CD8-positive, alpha-beta memory T cell (primary cell): ENCODE measurements at regions of chr1 and their contacts with region 1.

Region 1: DNA sequence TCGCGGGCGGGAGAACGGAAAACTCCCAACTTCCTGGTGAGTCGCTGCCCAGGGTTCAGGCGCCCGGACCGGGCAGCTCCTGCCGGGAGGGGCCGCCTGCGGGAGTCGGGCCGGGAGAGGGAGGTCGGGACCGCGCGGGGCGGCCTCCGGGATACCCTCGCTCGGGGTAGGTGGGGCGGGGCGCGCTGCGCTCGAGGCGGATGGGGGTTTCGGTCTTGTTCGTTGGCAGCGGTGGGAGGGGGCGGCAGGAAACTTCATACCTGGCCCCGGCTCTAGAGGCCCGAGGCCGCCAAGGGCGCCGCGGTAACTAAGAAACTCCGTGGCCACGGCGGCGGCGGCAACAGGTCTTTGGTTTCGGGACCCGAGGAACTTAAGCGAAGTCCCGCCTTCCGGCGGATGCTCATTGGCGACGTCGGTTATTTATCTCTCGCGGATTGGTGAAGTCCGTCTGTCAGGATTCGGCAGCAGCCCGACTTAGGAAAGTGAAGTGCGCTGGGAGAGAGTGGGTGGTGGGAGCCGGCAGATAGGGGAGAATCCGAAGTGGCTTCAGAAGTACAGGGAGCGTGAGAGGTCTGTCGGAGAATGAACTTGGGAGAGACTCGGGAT is 546 bp downstream of the NEK7 start:
- DNase-seq: peak; percentile 70 to 87 (median 77)
- H3K4me3 ChIP-seq: peak overlapping the region; percentile 84
- H3K4me3 Mint-ChIP-seq: peak overlapping the region; percentile 95 to 100 (median 99)
- H3K27ac ChIP-seq: peak overlapping the region; percentile 86
- H3K27ac Mint-ChIP-seq: peak overlapping the region; percentile 95 to 100 (median 100)
- H3K4me1 ChIP-seq: peaks cover 35% of the 10 kb centered on the region
- H3K4me1 Mint-ChIP-seq: peaks cover 36 to 56% (median 41%) of the 10 kb centered on the region in 3 donors
- H3K27me3 ChIP-seq: no peaks in the 10 kb centered on the region
- H3K27me3 Mint-ChIP-seq: peaks cover 0 to 3% of the 10 kb centered on the region in 2 donors

Region 2: DNA sequence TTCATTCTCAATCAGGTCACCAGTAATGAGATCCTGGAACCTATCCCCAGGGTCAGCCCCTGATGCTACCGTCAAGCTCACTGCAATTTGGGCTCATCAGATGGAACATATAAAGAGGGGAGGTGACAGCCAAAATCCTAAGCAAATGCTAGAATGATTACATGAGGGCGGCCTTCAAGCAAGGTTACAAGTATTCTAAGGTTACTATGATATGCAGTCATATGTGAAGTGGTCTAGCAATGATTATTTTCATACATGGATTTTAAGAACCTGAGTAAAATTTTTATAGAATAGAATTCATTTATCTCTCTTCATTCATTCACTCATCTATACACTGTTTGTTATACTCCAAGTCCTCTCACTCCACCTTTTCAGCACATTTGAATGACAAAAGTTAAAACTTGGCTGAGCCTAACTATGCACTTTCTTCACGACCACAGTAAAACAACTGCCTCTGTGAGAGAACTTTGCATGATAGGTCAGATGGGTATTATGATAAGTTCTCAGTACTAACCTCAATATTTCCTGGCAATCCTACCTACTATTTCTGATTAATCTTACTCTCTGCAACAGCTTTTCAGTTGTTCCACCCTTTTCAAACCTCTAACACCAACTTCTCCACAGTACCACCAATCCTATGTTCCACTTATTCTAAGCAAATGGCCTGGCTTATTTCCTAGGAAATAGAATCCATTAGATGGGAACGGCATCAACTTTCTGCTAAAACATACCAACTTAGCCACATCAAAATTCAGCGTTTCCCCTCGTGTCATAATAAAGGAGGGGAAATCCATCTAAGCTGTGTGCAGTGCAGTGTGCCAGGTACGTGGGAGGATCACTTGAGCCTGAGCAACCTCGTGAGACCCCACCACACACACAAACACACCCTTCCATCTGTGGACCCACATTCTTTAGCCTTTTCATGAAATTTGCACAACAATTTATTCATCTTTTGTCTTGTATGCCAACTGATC is 208.1 kb before region 1 on chr1:
- CTCF ChIA-PET with region 1: no interaction called
- POLR2A ChIA-PET with region 1: no interaction called
- DNase-seq: peak in 2 of 5 donors; percentile 34 to 48
- H3K4me3 ChIP-seq: peak overlapping the region; percentile 19
- H3K4me3 Mint-ChIP-seq: peak overlapping the region in 6 of 7 donors; percentile 1 to 76 (median 64)
- H3K27ac ChIP-seq: no peak overlapping the region
- H3K27ac Mint-ChIP-seq: peak overlapping the region in 7 of 8 donors; percentile 33 to 84 (median 39)
- H3K4me1 ChIP-seq: peaks cover 22% of the 10 kb centered on the region
- H3K4me1 Mint-ChIP-seq: peaks cover 25 to 33% (median 29%) of the 10 kb centered on the region in 3 donors
- H3K27me3 ChIP-seq: no peaks in the 10 kb centered on the region
- H3K27me3 Mint-ChIP-seq: peaks cover 0 to 18% of the 10 kb centered on the region in 2 donors

Region 3: GRCh38 chr1:198167436-198167934 is 10.1 kb after region 1 on chr1:
- CTCF ChIA-PET with region 1: interaction called, 40 read pairs
- POLR2A ChIA-PET with region 1: interaction called, 10 read pairs
- DNase-seq: peak in 4 of 5 donors; percentile 30 to 81 (median 69)
- H3K4me3 ChIP-seq: peak overlapping the region; percentile 18
- H3K4me3 Mint-ChIP-seq: peak overlapping the region; percentile 58 to 90 (median 75)
- H3K27ac ChIP-seq: peak overlapping the region; percentile 8
- H3K27ac Mint-ChIP-seq: peak overlapping the region; percentile 75 to 99 (median 93)
- H3K4me1 ChIP-seq: peaks cover 96% of the 10 kb centered on the region
- H3K4me1 Mint-ChIP-seq: peaks cover 87 to 96% (median 95%) of the 10 kb centered on the region in 3 donors
- H3K27me3 ChIP-seq: no peaks in the 10 kb centered on the region
- H3K27me3 Mint-ChIP-seq: no peaks in the 10 kb centered on the region

Region 4: GRCh38 chr1:198178615-198179014 is 21.3 kb after region 1 on chr1:
- CTCF ChIA-PET with region 1: interaction called, 3 read pairs
- POLR2A ChIA-PET with region 1: interaction called, 11 read pairs
- DNase-seq: no peak
- H3K4me3 ChIP-seq: no peak overlapping the region
- H3K4me3 Mint-ChIP-seq: peak overlapping the region in 6 of 7 donors; percentile 3 to 69 (median 45)
- H3K27ac ChIP-seq: peak overlapping the region; percentile 4
- H3K27ac Mint-ChIP-seq: peak overlapping the region; percentile 63 to 99 (median 88)
- H3K4me1 ChIP-seq: peaks cover 91% of the 10 kb centered on the region
- H3K4me1 Mint-ChIP-seq: peaks cover 85 to 98% (median 98%) of the 10 kb centered on the region in 3 donors
- H3K27me3 ChIP-seq: no peaks in the 10 kb centered on the region
- H3K27me3 Mint-ChIP-seq: no peaks in the 10 kb centered on the region

Region 5: DNA sequence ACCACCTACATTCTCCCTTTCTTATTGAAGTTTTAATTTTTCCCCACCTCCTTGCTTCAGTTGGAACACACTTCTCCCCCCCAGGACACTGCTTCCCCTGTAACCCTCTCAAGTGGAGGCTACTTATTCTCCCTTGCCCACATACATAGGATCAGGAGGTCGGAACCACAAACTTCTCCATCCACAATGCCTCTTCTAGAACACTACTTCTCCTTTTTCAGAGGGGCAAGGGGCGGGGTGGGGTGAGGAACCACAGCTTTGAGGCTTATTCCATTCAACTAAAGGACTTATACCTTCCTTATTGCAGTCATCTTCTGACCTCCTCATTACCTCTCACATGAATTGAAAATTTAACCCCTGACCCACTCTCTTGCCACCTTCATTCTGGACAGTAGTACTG is 80.8 kb after region 1 on chr1:
- CTCF ChIA-PET with region 1: no interaction called
- POLR2A ChIA-PET with region 1: no interaction called
- DNase-seq: no peak
- H3K4me3 ChIP-seq: no peak overlapping the region
- H3K4me3 Mint-ChIP-seq: no peak overlapping the region
- H3K27ac ChIP-seq: no peak overlapping the region
- H3K27ac Mint-ChIP-seq: no peak overlapping the region
- H3K4me1 ChIP-seq: peaks cover 9% of the 10 kb centered on the region
- H3K4me1 Mint-ChIP-seq: peaks cover 27 to 50% (median 48%) of the 10 kb centered on the region in 3 donors
- H3K27me3 ChIP-seq: no peaks in the 10 kb centered on the region
- H3K27me3 Mint-ChIP-seq: no peaks in the 10 kb centered on the region

Region 6: GRCh38 chr1:198669023-198669698 is 511.8 kb after region 1 on chr1:
- CTCF ChIA-PET with region 1: no interaction called
- POLR2A ChIA-PET with region 1: no interaction called
- DNase-seq: peak; percentile 20 to 76 (median 48)
- H3K4me3 ChIP-seq: no peak overlapping the region
- H3K4me3 Mint-ChIP-seq: peak overlapping the region; percentile 49 to 84 (median 79)
- H3K27ac ChIP-seq: peak overlapping the region; percentile 22
- H3K27ac Mint-ChIP-seq: peak overlapping the region; percentile 94 to 98 (median 98)
- H3K4me1 ChIP-seq: peaks cover 96% of the 10 kb centered on the region
- H3K4me1 Mint-ChIP-seq: peaks cover 85 to 97% (median 97%) of the 10 kb centered on the region in 3 donors
- H3K27me3 ChIP-seq: no peaks in the 10 kb centered on the region
- H3K27me3 Mint-ChIP-seq: no peaks in the 10 kb centered on the region